ENCODE measurements at regions of chr19 and their contacts with region 1.

Region 1: GRCh38 chr19:50537762-50538230 is 24.1 kb upstream of the ASPDH start:
- DNase-seq: peak; percentile 98
- ATAC-seq: peak; percentile 97
- H3K4me3 Mint-ChIP-seq: no peak overlapping the region
- H3K27ac Mint-ChIP-seq: no peak overlapping the region
- H3K4me1 Mint-ChIP-seq: 0 out of 2 replicates have a peak, but pooled peaks cover 3% of the 10 kb centered on the region
- H3K27me3 Mint-ChIP-seq: peaks cover 8% of the 10 kb centered on the region
- CTCF ChIP-seq: peak; percentile 88

Region 2: GRCh38 chr19:50486823-50487511 is 50.8 kb before region 1 on chr19:
- CTCF ChIA-PET with region 1: interaction called, 14 read pairs
- POLR2A ChIA-PET with region 1: no interaction called
- DNase-seq: peak; percentile 93
- ATAC-seq: peak; percentile 60
- H3K4me3 Mint-ChIP-seq: no peak overlapping the region
- H3K27ac Mint-ChIP-seq: no peak overlapping the region
- H3K4me1 Mint-ChIP-seq: peaks cover 35% of the 10 kb centered on the region
- H3K27me3 Mint-ChIP-seq: peaks cover 71% of the 10 kb centered on the region
- CTCF ChIP-seq: peak; percentile 93

Region 3: DNA sequence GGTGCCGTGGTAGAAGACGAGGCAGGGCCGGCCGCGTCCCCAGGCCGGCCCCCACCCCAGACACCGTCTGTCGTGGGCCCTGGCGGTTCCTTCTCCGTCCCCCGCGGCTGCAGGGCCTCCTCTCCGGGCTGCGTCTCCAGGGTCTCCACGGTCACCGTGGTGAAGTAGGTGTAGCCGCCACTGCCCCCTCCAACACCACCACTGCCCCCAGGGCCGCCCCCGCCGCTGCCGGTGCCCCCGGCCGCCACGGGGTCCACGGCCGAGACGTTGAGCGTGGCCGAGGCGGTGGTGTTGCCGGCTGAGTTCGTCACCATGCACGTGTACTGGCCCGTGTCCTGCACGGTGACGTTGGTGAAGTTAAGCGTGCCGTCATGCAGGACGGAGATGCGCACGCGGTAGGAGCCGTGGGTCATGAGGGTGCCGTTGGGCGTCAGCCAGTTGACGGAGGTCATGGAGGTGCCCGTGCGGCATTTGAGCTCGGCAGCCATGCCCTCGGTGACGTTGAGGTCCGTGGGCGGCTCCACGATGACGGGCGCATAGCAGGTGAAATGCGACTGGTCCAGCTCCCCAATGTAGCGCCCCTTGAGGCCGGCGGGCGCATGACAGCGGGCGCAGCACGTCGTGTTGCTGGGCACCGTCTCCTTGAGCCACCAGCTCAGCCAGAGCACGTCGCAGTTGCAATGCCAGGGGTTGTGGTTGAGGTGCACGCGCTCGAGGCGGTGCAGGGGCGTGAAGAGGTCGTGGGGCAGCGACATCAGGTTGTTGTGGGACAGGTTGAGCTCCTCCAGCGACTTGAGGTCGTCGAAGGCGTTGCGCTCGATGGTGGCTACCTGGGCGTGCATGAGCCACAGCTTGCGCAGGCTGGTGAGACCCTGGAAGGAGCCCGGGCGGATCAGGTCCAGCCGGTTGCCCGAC is 19.4 kb before region 1 on chr19:
- CTCF ChIA-PET with region 1: interaction called, 55 read pairs
- POLR2A ChIA-PET with region 1: interaction called, 4 read pairs
- DNase-seq: peak; percentile 73
- ATAC-seq: peak; percentile 72
- H3K4me3 Mint-ChIP-seq: no peak overlapping the region
- H3K27ac Mint-ChIP-seq: no peak overlapping the region
- H3K4me1 Mint-ChIP-seq: 0 out of 2 replicates have a peak, but pooled peaks cover 1% of the 10 kb centered on the region
- H3K27me3 Mint-ChIP-seq: peaks cover 21% of the 10 kb centered on the region
- CTCF ChIP-seq: peak; percentile 59

Region 4: DNA sequence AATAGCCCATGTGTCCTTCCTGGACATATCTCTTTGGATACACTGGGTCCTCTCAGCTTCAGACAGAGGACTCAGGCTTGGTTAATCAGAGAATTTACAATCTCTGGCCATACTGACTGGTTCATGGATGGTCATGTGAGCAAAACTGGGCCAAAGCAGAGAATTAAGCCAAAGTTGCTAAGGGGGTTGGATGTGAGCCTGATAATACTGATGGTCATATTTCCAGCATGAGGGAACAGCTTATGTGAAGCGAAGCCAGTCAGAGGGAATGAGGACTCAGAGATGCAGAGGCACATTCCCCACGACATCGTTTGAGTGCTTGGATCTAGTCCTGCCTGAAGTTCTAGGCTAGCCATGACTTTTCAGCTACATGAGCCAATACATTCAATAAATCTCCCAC is 52.4 kb after region 1 on chr19:
- CTCF ChIA-PET with region 1: interaction called, 11 read pairs
- POLR2A ChIA-PET with region 1: interaction called, 3 read pairs
- DNase-seq: no peak
- ATAC-seq: no peak
- H3K4me3 Mint-ChIP-seq: no peak overlapping the region
- H3K27ac Mint-ChIP-seq: no peak overlapping the region
- H3K4me1 Mint-ChIP-seq: peaks cover 11% of the 10 kb centered on the region
- H3K27me3 Mint-ChIP-seq: peaks cover 35% of the 10 kb centered on the region
- CTCF ChIP-seq: no peak

Region 5: DNA sequence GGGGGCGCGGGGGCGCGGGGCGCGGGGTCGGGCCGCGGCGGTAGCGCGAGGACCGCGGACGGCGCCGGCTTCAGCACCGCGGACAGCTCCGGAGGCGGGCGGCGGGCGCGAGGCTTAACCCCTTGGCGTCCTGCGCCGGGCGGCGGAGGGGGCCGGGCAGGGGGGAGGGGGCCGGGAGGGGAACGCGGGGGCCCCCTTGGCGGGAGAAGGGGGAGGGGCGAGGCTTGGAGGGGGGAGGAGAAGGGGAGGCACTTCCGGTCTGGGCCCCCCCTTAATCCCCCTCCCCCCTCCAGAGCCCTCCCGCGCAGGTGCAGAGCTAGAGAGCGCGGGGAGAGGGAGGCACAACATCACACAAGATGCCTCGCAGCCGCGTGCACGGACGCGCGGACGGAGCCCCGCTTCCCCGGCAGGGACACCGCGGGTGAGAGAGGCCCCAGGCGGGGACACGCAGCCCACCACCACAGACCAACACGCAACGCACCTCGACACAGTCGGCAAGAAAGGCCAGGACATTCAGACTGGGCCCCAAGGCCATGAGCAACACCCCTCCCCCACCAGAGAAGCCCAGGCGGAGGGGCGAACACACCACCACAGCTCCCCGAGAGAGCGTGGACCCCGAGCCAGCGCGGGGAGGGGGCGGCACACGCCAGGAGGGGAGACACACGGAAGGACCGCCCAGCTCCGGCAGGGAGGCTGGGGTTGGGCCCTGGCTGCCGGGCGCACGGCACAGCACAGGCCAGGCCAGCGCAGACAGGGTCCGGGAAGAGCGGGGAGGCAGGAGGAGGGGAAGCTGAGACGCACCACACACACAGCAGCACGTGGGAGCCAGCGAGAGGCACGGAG is 157.7 kb after region 1 on chr19:
- CTCF ChIA-PET with region 1: interaction called, 14 read pairs
- POLR2A ChIA-PET with region 1: no interaction called
- DNase-seq: peak; percentile 61
- ATAC-seq: peak; percentile 64
- H3K4me3 Mint-ChIP-seq: peak overlapping the region; percentile 61
- H3K27ac Mint-ChIP-seq: no peak overlapping the region
- H3K4me1 Mint-ChIP-seq: peaks cover 16% of the 10 kb centered on the region
- H3K27me3 Mint-ChIP-seq: peaks cover 92% of the 10 kb centered on the region
- CTCF ChIP-seq: no peak

Region 6: DNA sequence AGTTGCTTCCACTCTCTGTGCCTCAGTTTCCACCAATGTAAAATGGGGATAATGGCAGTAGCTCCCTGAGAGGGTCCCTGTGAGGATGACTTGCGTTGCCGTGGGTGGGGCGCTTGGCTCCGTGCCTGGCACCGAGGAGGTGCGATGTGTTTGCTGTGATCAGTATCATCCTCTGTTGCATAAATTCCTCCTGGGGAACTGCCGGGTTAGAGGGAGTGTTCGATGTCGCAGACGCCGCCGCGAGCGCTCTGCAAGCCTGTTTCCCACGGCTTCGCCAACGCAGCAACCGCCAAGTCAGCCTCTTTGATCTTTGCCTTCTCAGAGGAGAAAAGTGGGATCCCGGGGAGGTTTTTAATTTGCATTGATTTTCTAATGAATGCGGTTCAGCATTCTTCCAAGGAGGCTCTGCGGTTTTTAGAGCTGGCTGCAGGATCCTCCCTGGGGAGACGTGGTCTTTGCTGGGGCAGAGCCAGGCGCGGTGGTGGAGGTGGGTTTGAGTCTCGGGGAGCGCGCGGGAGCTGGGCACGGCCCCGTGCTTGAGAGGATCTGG is 240.0 kb after region 1 on chr19:
- CTCF ChIA-PET with region 1: interaction called, 14 read pairs
- POLR2A ChIA-PET with region 1: no interaction called
- DNase-seq: peak; percentile 71
- ATAC-seq: peak; percentile 54
- H3K4me3 Mint-ChIP-seq: peak overlapping the region; percentile 59
- H3K27ac Mint-ChIP-seq: 0 out of 2 replicates have a peak overlapping the region, but pooled peaks have one; percentile 51
- H3K4me1 Mint-ChIP-seq: peaks cover 24% of the 10 kb centered on the region
- H3K27me3 Mint-ChIP-seq: peaks cover 95% of the 10 kb centered on the region
- CTCF ChIP-seq: no peak